Breast epithelium (tissue), 4 donors: ENCODE measurements at regions of chr13 and their contacts with region 1.

Region 1: DNA sequence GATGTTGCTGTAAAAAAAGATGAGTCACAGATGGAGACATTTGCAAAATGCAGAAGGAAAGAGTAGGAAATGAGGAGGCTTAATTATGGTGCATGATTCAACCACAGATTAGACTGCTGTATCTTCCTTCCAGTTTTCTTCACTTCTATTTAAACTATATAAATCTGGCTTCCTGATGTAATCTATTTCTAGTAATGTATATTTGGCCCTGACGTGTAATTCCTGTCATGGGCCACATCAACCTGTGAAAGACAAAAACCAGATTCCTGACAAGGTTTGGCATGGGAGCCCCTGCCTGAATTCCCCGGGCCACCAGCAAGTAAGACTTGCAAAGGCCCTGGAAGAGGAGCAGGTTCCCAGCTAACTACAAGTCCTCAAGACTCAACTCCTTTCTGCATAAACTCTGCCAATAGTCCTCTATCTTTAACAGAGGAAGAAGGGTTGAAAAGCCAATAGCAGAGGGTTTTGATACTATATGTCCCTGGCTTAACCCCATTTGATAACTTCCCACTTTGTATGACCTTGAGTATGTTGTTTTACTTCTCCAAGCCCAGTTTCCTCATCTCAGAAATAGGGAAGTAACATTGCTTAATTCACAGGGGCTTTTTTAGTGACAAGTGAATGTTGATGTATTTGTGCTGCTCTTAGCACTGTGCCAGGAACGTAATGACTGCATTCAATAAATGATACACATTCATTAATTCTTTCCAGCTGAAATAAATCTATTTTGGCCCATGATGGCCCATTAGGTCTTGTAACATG is 172.7 kb downstream of the SPRY2 start:
- DNase-seq: no peak
- H3K4me3 ChIP-seq: no peak overlapping the region
- H3K27ac ChIP-seq: no peak overlapping the region
- H3K4me1 ChIP-seq: no peaks in the 10 kb centered on the region
- H3K27me3 ChIP-seq: no peaks in the 10 kb centered on the region
- CTCF ChIP-seq: no peak
- POLR2A ChIP-seq: no peak

Region 2: GRCh38 chr13:80840316-80840976 is 672.2 kb after region 1 on chr13:
- intact Hi-C with region 1: loop called (anchors 5 kb)
- DNase-seq: no peak
- H3K4me3 ChIP-seq: no peak overlapping the region
- H3K27ac ChIP-seq: no peak overlapping the region
- H3K4me1 ChIP-seq: no peaks in the 10 kb centered on the region
- H3K27me3 ChIP-seq: no peaks in the 10 kb centered on the region
- CTCF ChIP-seq: no peak
- POLR2A ChIP-seq: no peak